ENCODE measurements at regions of chr12 and their contacts with region 1.

Region 1: GRCh38 chr12:64550755-64551154 is 59.5 kb upstream of the RASSF3 start:
- DNase-seq: no peak
- ATAC-seq: no peak
- H3K4me3 ChIP-seq: no peak overlapping the region
- H3K4me3 Mint-ChIP-seq: no peak overlapping the region
- H3K27ac ChIP-seq: no peak overlapping the region
- H3K27ac Mint-ChIP-seq: peak overlapping the region in 3 of 9 donors; percentile 7 to 83 (median 18)
- H3K4me1 ChIP-seq: peaks cover 0 to 4% of the 10 kb centered on the region in 2 donors
- H3K4me1 Mint-ChIP-seq: peaks cover 2 to 11% (median 9%) of the 10 kb centered on the region in 7 donors
- H3K27me3 ChIP-seq: no peaks in the 10 kb centered on the region
- H3K27me3 Mint-ChIP-seq: peaks cover 0 to 20% (median 0%) of the 10 kb centered on the region in 5 donors

Region 2: DNA sequence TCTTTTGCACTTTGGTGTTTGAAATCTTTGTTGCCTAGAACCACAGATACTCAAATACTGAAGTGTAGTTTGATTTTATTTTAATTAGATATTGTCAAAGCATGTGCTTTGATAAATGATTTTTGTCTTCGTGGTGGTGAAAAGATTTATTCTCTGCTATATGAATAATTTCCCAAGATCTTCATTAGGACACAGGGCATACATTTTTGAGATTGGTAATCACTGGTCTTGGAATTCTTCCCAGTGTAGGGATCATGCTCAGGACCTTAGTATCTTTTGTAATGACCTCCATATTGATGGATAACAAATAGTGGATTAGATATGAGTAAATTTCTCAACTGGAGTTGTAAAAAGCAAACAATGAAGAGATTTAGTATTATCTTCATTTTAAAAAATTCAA is 70.6 kb before region 1 on chr12:
- CTCF ChIA-PET with region 1: no interaction called
- POLR2A ChIA-PET with region 1: no interaction called
- intact Hi-C with region 1: no loop called
- DNase-seq: no peak
- ATAC-seq: no peak
- H3K4me3 ChIP-seq: no peak overlapping the region
- H3K4me3 Mint-ChIP-seq: no peak overlapping the region
- H3K27ac ChIP-seq: no peak overlapping the region
- H3K27ac Mint-ChIP-seq: no peak overlapping the region
- H3K4me1 ChIP-seq: no peaks in the 10 kb centered on the region
- H3K4me1 Mint-ChIP-seq: peaks cover 0 to 4% (median 0%) of the 10 kb centered on the region in 7 donors
- H3K27me3 ChIP-seq: no peaks in the 10 kb centered on the region
- H3K27me3 Mint-ChIP-seq: no peaks in the 10 kb centered on the region

Region 3: GRCh38 chr12:64714551-64714968 is 163.8 kb after region 1 on chr12:
- CTCF ChIA-PET with region 1: interaction called, 11 read pairs
- POLR2A ChIA-PET with region 1: interaction called, 3 read pairs
- intact Hi-C with region 1: loop called in 1 of 2 experiments (anchors 1 kb)
- DNase-seq: no peak
- ATAC-seq: peak; percentile 89
- H3K4me3 ChIP-seq: no peak overlapping the region
- H3K4me3 Mint-ChIP-seq: no peak overlapping the region
- H3K27ac ChIP-seq: no peak overlapping the region
- H3K27ac Mint-ChIP-seq: peak overlapping the region in 4 of 9 donors; percentile 8 to 48 (median 32)
- H3K4me1 ChIP-seq: peaks cover 0 to 13% of the 10 kb centered on the region in 2 donors
- H3K4me1 Mint-ChIP-seq: peaks cover 12 to 40% (median 29%) of the 10 kb centered on the region in 7 donors
- H3K27me3 ChIP-seq: no peaks in the 10 kb centered on the region
- H3K27me3 Mint-ChIP-seq: no peaks in the 10 kb centered on the region